ENCODE measurements at regions of chr11 and their contacts with region 1.

Region 1: GRCh38 chr11:86696004-86696403 is 23.6 kb upstream of the ME3 start:
- DNase-seq: no peak
- CTCF ChIP-seq: no peak

Region 2: GRCh38 chr11:86681483-86681756 is 14.6 kb before region 1 on chr11:
- CTCF ChIA-PET with region 1: interaction called, 10 read pairs
- POLR2A ChIA-PET with region 1: no interaction called
- DNase-seq: no peak
- CTCF ChIP-seq: no peak